PC-9 (cell line): ENCODE measurements at regions of chr6 and their contacts with region 1.

Region 1: DNA sequence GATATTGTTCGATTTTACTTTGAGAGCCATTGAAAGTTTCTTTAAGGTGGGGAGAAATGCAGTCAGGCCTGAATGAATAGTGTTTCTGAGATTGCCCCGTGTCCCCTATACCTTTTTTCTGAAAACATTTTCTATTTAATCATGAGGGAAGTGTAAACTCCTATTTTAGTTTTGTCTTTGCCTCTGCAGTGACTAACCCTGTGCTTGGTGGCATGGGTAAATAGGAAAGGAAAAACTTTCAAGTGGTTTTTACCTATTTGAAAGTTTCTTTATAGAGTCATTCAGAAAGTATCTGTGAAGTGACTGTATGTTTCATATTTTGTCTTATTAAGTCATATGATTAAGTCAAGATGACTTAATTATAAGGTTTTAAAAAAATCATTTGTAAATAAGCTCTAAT is 14.5 kb downstream of the SNRNP48 start:
- DNase-seq: no peak
- H3K4me3 ChIP-seq: no peak overlapping the region
- H3K27ac ChIP-seq: no peak overlapping the region
- H3K4me1 ChIP-seq: no peaks in the 10 kb centered on the region
- H3K27me3 ChIP-seq: no peaks in the 10 kb centered on the region
- CTCF ChIP-seq: no peak

Region 2: GRCh38 chr6:7431674-7432390 is 172.7 kb before region 1 on chr6:
- CTCF ChIA-PET with region 1: no interaction called
- POLR2A ChIA-PET with region 1: interaction called, 21 read pairs
- intact Hi-C with region 1: no loop called
- DNase-seq: no peak
- H3K4me3 ChIP-seq: no peak overlapping the region
- H3K27ac ChIP-seq: no peak overlapping the region
- H3K4me1 ChIP-seq: no peaks in the 10 kb centered on the region
- H3K27me3 ChIP-seq: no peaks in the 10 kb centered on the region
- CTCF ChIP-seq: no peak

Region 3: DNA sequence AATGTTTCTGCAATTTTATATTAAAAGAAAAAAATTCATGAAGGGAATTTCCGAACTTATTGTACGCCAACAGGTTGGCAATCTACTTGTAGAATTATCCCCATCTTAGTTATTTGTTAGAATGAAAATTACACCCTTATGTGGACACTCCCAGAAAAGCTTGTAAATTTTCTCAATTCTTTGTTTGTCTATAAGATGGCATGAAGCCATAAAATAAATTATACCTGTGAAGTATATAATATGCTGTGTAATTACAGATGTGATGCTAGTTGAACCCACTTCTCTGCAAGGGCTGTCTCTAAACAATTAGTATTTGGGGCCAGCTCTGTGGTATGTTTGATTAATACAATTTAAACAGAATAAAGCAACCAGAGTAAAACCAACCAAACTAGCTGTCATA is 115.1 kb before region 1 on chr6:
- CTCF ChIA-PET with region 1: no interaction called
- POLR2A ChIA-PET with region 1: no interaction called
- intact Hi-C with region 1: no loop called
- DNase-seq: no peak
- H3K4me3 ChIP-seq: no peak overlapping the region
- H3K27ac ChIP-seq: no peak overlapping the region
- H3K4me1 ChIP-seq: no peaks in the 10 kb centered on the region
- H3K27me3 ChIP-seq: no peaks in the 10 kb centered on the region
- CTCF ChIP-seq: no peak